ENCODE measurements at regions of chr15 and their contacts with region 1.

Region 1: DNA sequence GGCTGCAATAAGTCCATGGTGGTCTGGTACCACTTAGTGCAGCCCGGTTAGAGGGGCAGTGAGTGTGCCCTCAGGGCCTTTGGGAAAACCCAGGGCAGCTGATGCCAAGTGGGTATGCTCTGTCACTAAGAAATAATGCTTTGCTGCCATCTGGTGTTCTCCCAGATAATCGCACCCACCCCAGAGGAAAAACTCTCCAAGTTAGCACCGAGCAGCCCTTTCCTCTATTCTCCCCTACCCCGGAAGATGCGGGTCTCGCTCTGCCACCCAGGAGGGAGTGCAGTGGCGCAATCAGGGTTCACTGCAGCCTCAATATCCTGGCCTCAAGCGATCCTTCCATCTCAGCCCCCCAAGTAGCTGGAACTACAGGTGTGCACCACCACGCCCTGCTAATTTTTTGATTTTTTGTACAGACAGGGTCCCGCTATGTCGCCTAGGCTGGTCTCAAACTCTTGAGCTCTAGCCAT is 21.3 kb upstream of the DAPK2 start:
- DNase-seq: peak; percentile 44 to 74 (median 63)
- ATAC-seq: peak; percentile 89
- H3K4me3 ChIP-seq: no peak overlapping the region
- H3K4me3 Mint-ChIP-seq: peak overlapping the region in 1 of 10 donors; percentile 33
- H3K27ac ChIP-seq: no peak overlapping the region
- H3K27ac Mint-ChIP-seq: peak overlapping the region in 2 of 9 donors; percentile 19 to 36
- H3K4me1 ChIP-seq: peaks cover 0 to 3% of the 10 kb centered on the region in 2 donors
- H3K4me1 Mint-ChIP-seq: peaks cover 0 to 15% (median 4%) of the 10 kb centered on the region in 7 donors
- H3K27me3 ChIP-seq: no peaks in the 10 kb centered on the region
- H3K27me3 Mint-ChIP-seq: no peaks in the 10 kb centered on the region

Region 2: GRCh38 chr15:63048115-63048775 is 1019.4 kb before region 1 on chr15:
- CTCF ChIA-PET with region 1: no interaction called
- POLR2A ChIA-PET with region 1: no interaction called
- intact Hi-C with region 1: loop called in 1 of 2 experiments (anchors 2 kb)
- DNase-seq: peak; percentile 72 to 90 (median 85)
- ATAC-seq: peak; percentile 92
- H3K4me3 ChIP-seq: peak overlapping the region; percentile 76
- H3K4me3 Mint-ChIP-seq: peak overlapping the region; percentile 84 to 97 (median 94)
- H3K27ac ChIP-seq: peak overlapping the region; percentile 59
- H3K27ac Mint-ChIP-seq: peak overlapping the region; percentile 25 to 85 (median 68)
- H3K4me1 ChIP-seq: peaks cover 7 to 16% of the 10 kb centered on the region in 2 donors
- H3K4me1 Mint-ChIP-seq: peaks cover 13 to 42% (median 26%) of the 10 kb centered on the region in 7 donors
- H3K27me3 ChIP-seq: peaks cover 17 to 27% of the 10 kb centered on the region in 2 donors
- H3K27me3 Mint-ChIP-seq: peaks cover 30 to 60% (median 36%) of the 10 kb centered on the region in 5 donors

Region 3: DNA sequence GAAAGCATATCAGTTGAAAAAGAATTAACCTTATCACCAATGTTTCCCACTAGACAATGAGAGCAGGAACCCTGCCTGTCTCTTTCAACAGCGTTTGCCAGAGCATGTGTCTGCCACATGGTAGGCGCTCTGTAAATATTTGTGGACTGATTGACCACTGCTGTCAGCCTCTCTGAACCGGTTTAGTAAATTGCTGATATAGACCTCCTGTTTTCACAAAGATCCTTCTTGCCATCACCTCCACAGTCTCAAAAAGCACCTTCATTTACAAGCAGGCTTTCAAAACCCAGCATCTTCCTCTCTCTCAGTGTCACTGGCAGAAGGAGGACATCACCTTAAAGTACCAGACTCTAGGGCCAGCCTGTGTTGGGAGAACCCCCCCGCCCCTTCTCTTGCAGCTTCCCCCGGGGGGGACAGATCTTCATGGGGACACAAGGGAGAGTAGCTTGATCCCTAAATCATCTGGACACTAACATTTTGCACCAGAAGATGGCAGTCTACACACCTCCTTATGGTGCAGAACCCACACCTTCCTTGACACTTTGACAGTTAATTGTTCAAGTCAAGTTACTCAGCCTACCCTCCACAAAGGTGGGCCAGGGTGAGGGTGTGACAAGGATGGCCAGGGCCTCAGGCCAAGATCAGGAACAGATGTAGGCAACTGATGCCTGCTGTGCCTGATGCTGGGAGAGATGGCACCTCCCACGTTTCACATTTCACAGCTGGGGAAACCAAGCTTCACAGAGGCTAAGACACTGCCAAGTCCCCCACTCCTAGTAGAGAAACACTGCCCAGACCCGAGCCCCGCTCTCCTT is 601.0 kb before region 1 on chr15:
- CTCF ChIA-PET with region 1: no interaction called
- POLR2A ChIA-PET with region 1: no interaction called
- intact Hi-C with region 1: loop called (anchors 1 kb)
- DNase-seq: peak in 8 of 9 donors; percentile 46 to 80 (median 74)
- ATAC-seq: peak; percentile 95
- H3K4me3 ChIP-seq: no peak overlapping the region
- H3K4me3 Mint-ChIP-seq: peak overlapping the region in 2 of 10 donors; percentile 5 to 6
- H3K27ac ChIP-seq: no peak overlapping the region
- H3K27ac Mint-ChIP-seq: peak overlapping the region; percentile 37 to 96 (median 82)
- H3K4me1 ChIP-seq: peaks cover 0 to 4% of the 10 kb centered on the region in 2 donors
- H3K4me1 Mint-ChIP-seq: peaks cover 12 to 43% (median 33%) of the 10 kb centered on the region in 7 donors
- H3K27me3 ChIP-seq: no peaks in the 10 kb centered on the region
- H3K27me3 Mint-ChIP-seq: peaks cover 0 to 18% (median 0%) of the 10 kb centered on the region in 5 donors

Region 4: DNA sequence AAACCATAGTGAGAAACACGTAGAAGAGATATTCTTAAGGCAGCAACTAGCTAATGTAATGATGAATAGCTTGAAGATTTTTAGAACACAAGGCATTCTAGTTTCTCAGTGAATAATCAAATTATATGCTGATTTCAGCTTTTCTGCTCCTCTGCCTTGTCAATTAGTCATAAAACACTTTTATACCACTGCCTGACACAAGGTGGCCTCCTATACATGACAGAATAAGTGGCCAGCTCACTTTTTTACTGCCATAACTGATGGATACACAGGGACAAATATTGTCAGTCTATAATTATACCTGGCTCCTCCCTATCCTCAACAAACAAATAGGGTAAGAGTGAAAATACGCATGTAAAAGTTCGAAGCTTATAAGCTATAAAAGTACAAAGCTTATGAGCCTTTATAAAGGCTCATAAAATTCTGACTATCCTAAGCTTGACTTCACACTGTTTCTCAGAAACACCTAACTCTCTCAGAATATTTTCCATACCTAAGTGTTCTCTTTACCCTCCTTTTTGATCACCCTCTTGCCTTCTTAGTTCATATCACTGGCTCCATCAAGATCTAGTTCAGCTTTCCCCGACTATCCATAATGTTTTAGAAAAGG is 315.4 kb before region 1 on chr15:
- CTCF ChIA-PET with region 1: interaction called, 79 read pairs
- POLR2A ChIA-PET with region 1: no interaction called
- intact Hi-C with region 1: loop called (anchors 1 kb)
- DNase-seq: peak in 7 of 9 donors; percentile 39 to 70 (median 59)
- ATAC-seq: peak; percentile 93
- H3K4me3 ChIP-seq: no peak overlapping the region
- H3K4me3 Mint-ChIP-seq: no peak overlapping the region
- H3K27ac ChIP-seq: no peak overlapping the region
- H3K27ac Mint-ChIP-seq: peak overlapping the region in 7 of 9 donors; percentile 5 to 83 (median 63)
- H3K4me1 ChIP-seq: no peaks in the 10 kb centered on the region
- H3K4me1 Mint-ChIP-seq: peaks cover 0 to 9% (median 2%) of the 10 kb centered on the region in 7 donors
- H3K27me3 ChIP-seq: no peaks in the 10 kb centered on the region
- H3K27me3 Mint-ChIP-seq: no peaks in the 10 kb centered on the region

Region 5: DNA sequence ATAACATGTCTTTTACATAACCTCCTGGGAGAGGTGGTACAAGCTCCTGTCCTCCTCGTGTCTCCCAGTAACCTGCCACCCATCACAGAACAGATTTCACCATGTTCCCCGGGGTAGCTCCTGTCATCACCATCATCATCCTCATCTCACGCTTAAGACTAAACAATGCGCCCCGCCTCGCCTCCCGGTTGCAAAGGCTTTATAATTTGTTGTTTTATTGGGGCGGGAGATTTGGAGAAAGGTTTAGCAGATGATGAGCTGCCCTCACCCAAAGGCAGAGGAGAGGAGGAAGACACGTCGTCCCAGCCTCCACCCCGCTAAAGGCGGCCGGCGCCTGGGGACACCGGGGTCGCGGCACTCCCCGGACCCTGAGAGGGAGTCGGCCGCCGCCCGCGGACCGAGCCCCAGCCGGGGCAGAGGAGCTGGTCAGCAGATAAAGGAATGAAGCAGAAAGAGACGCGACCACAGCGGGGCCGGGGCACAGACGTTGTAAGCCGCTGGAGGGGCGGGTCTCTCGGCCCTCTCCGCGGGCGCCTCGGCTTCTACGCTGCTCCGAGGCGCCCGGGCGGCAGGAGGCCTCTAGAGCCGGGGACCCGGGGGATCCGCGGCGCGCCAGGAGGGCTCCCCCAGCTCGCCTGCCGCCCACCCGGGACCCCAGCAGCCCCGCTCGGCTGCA is 234.4 kb before region 1 on chr15:
- CTCF ChIA-PET with region 1: no interaction called
- POLR2A ChIA-PET with region 1: no interaction called
- intact Hi-C with region 1: loop called in 1 of 2 experiments (anchors 2 kb)
- DNase-seq: peak; percentile 11 to 55 (median 38)
- ATAC-seq: peak; percentile 48
- H3K4me3 ChIP-seq: peak overlapping the region; percentile 68
- H3K4me3 Mint-ChIP-seq: peak overlapping the region; percentile 86 to 98 (median 94)
- H3K27ac ChIP-seq: peak overlapping the region; percentile 99
- H3K27ac Mint-ChIP-seq: peak overlapping the region; percentile 94 to 99 (median 97)
- H3K4me1 ChIP-seq: peaks cover 30 to 31% of the 10 kb centered on the region in 2 donors
- H3K4me1 Mint-ChIP-seq: peaks cover 46 to 66% (median 56%) of the 10 kb centered on the region in 7 donors
- H3K27me3 ChIP-seq: no peaks in the 10 kb centered on the region
- H3K27me3 Mint-ChIP-seq: peaks cover 0 to 9% (median 0%) of the 10 kb centered on the region in 5 donors

Region 6: DNA sequence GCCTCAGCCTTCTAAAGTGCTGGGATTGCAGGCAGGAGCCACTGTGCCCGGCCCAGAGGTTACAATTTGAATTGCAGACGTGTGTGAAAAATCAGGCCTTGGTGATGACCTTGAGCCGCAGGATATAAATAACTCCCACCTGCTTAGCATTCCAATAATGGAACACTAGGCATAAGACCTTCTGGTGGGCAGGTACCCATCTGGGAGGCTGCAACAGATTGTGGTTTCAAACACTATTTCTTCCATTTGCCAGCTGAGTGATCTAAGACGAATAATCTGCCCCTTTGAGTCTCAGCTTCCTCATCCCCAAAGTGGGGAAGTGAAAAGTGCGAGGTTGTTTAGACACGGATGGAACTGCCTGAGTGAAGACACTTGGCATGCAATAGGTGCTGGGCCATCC is 186.2 kb before region 1 on chr15:
- CTCF ChIA-PET with region 1: no interaction called
- POLR2A ChIA-PET with region 1: no interaction called
- intact Hi-C with region 1: no loop called
- DNase-seq: no peak
- ATAC-seq: no peak
- H3K4me3 ChIP-seq: no peak overlapping the region
- H3K4me3 Mint-ChIP-seq: no peak overlapping the region
- H3K27ac ChIP-seq: no peak overlapping the region
- H3K27ac Mint-ChIP-seq: no peak overlapping the region
- H3K4me1 ChIP-seq: no peaks in the 10 kb centered on the region
- H3K4me1 Mint-ChIP-seq: peaks cover 0 to 13% (median 0%) of the 10 kb centered on the region in 7 donors
- H3K27me3 ChIP-seq: no peaks in the 10 kb centered on the region
- H3K27me3 Mint-ChIP-seq: no peaks in the 10 kb centered on the region

Region 7: GRCh38 chr15:64010719-64011118 is 56.9 kb before region 1 on chr15:
- CTCF ChIA-PET with region 1: interaction called, 10 read pairs
- POLR2A ChIA-PET with region 1: no interaction called
- intact Hi-C with region 1: loop called in 1 of 2 experiments (anchors 1 kb)
- DNase-seq: peak; percentile 43 to 92 (median 85)
- ATAC-seq: peak; percentile 98
- H3K4me3 ChIP-seq: no peak overlapping the region
- H3K4me3 Mint-ChIP-seq: peak overlapping the region; percentile 32 to 87 (median 62)
- H3K27ac ChIP-seq: peak overlapping the region; percentile 32
- H3K27ac Mint-ChIP-seq: peak overlapping the region; percentile 87 to 98 (median 95)
- H3K4me1 ChIP-seq: peaks cover 24 to 27% of the 10 kb centered on the region in 2 donors
- H3K4me1 Mint-ChIP-seq: peaks cover 20 to 64% (median 30%) of the 10 kb centered on the region in 7 donors
- H3K27me3 ChIP-seq: no peaks in the 10 kb centered on the region
- H3K27me3 Mint-ChIP-seq: peaks cover 0 to 3% (median 0%) of the 10 kb centered on the region in 5 donors